CD4-positive, alpha-beta T cell (primary cell): ENCODE measurements at regions of chr1 and their contacts with region 1.

Region 1: GRCh38 chr1:5514519-5515183 is 477.6 kb downstream of the NPHP4 start:
- DNase-seq: peak; percentile 46 to 80 (median 62)
- ATAC-seq: peak; percentile 37
- H3K4me3 ChIP-seq: no peak overlapping the region
- H3K4me3 Mint-ChIP-seq: no peak overlapping the region
- H3K27ac ChIP-seq: no peak overlapping the region
- H3K27ac Mint-ChIP-seq: no peak overlapping the region
- H3K4me1 ChIP-seq: peaks cover 5% of the 10 kb centered on the region
- H3K4me1 Mint-ChIP-seq: peaks cover 4% of the 10 kb centered on the region
- H3K27me3 ChIP-seq: no peaks in the 10 kb centered on the region
- H3K27me3 Mint-ChIP-seq: peaks cover 17% of the 10 kb centered on the region
- CTCF ChIP-seq: peak; percentile 100

Region 2: DNA sequence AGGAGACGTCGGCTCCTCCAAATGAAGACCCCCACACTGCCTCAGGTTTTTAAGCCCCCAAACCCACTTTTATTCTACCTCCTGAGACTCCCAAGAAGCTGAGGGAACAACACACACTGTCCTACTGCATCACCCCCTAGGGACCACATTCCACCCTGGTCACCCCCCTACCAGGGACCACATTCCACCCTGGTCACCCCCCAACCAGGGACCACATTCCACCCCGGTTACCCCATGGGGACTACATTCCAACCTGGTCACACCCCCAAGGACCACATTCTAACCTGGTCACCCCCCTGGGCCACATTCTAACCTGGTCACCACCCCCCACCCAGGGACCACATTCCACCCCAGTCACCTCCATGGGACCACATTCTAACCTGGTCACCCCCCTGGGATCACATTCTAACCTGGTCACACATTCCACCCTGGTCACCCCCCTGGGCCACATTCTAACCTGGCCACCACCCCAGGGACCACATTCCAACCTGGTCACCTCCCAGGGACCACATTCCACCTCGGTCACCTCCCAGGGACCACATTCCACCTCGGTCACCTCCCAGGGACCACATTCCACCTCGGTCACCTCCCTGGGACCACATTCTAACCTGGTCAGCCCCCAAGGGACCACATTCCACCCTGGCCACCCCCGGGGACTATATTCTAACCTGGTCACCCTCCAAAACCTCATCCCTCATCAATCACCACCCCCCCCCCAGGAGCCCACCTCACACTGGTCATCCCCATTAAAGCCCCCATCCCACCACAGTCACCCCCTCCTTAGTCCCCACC is 110.0 kb before region 1 on chr1:
- CTCF ChIA-PET with region 1: no interaction called
- POLR2A ChIA-PET with region 1: no interaction called
- intact Hi-C with region 1: no loop called
- DNase-seq: no peak
- ATAC-seq: no peak
- H3K4me3 ChIP-seq: no peak overlapping the region
- H3K4me3 Mint-ChIP-seq: no peak overlapping the region
- H3K27ac ChIP-seq: no peak overlapping the region
- H3K27ac Mint-ChIP-seq: no peak overlapping the region
- H3K4me1 ChIP-seq: peaks cover 3% of the 10 kb centered on the region
- H3K4me1 Mint-ChIP-seq: peaks cover 5% of the 10 kb centered on the region
- H3K27me3 ChIP-seq: no peaks in the 10 kb centered on the region
- H3K27me3 Mint-ChIP-seq: no peaks in the 10 kb centered on the region
- CTCF ChIP-seq: no peak

Region 3: GRCh38 chr1:5745776-5746610 is 231.3 kb after region 1 on chr1:
- CTCF ChIA-PET with region 1: no interaction called
- POLR2A ChIA-PET with region 1: no interaction called
- intact Hi-C with region 1: loop called (anchors 1 to 2 kb)
- DNase-seq: peak; percentile 26 to 74 (median 40)
- ATAC-seq: peak; percentile 41
- H3K4me3 ChIP-seq: no peak overlapping the region
- H3K4me3 Mint-ChIP-seq: no peak overlapping the region
- H3K27ac ChIP-seq: no peak overlapping the region
- H3K27ac Mint-ChIP-seq: no peak overlapping the region
- H3K4me1 ChIP-seq: peaks cover 4% of the 10 kb centered on the region
- H3K4me1 Mint-ChIP-seq: no peaks in the 10 kb centered on the region
- H3K27me3 ChIP-seq: peaks cover 6 to 13% of the 10 kb centered on the region in 2 experiments
- H3K27me3 Mint-ChIP-seq: peaks cover 32% of the 10 kb centered on the region
- CTCF ChIP-seq: peak; percentile 74

Region 4: DNA sequence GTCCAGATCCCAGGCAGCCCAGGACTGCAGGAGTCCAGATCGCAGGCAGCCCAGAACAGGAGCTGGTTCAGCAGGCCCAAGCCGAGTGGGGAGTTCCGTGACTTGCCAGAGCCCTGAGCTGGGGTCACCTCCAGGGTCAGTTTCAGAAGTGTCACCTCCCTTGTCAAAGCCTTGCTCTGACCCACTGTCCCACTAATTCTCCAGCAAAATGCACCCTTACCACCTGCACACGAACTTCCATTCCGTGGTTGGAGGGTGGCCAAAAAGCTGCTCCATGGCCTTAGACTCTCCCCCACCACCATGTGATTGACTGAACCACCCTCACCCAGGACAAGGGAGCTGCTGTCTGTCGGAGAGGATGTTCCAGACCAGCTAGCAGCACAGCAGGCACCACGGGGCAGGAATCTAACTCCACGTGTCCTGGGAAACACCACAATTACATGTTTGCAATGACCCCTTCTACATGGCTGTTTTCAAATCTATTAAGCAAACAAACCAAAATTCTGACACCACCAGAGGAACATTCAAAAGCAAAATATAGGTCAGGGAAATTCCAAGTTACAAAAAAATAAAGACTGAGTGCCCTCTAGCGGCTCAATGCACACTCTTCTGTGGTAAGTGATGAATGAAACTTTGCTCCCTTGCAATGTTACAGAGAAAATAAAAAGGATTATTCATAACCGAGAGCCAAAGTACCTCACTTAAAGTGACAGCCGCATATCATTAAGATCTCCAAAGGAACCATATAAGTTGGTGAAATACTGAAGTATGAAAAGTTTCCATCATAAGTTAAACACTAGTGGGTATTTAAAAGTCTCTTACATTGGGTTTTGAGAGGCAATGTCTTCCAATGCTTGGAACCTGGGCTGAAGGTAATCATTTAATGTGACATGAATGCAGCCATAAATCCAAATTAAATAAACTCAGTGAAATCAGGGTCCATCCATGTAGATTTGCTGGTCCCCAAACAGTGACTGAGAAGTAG is 401.2 kb after region 1 on chr1:
- CTCF ChIA-PET with region 1: interaction called, 5 read pairs
- POLR2A ChIA-PET with region 1: no interaction called
- intact Hi-C with region 1: loop called (anchors 2 kb)
- DNase-seq: peak in 7 of 14 experiments; percentile 7 to 65 (median 39)
- ATAC-seq: peak; percentile 52
- H3K4me3 ChIP-seq: no peak overlapping the region
- H3K4me3 Mint-ChIP-seq: no peak overlapping the region
- H3K27ac ChIP-seq: no peak overlapping the region
- H3K27ac Mint-ChIP-seq: no peak overlapping the region
- H3K4me1 ChIP-seq: peaks cover 4% of the 10 kb centered on the region
- H3K4me1 Mint-ChIP-seq: peaks cover 6% of the 10 kb centered on the region
- H3K27me3 ChIP-seq: no peaks in the 10 kb centered on the region
- H3K27me3 Mint-ChIP-seq: no peaks in the 10 kb centered on the region
- CTCF ChIP-seq: peak; percentile 66

Region 5: GRCh38 chr1:5975133-5975880 is 460.7 kb after region 1 on chr1:
- CTCF ChIA-PET with region 1: interaction called, 10 read pairs
- POLR2A ChIA-PET with region 1: interaction called, 3 read pairs
- intact Hi-C with region 1: no loop called
- DNase-seq: peak in 9 of 14 experiments; percentile 28 to 68 (median 40)
- ATAC-seq: peak; percentile 76
- H3K4me3 ChIP-seq: no peak overlapping the region
- H3K4me3 Mint-ChIP-seq: no peak overlapping the region
- H3K27ac ChIP-seq: no peak overlapping the region
- H3K27ac Mint-ChIP-seq: no peak overlapping the region
- H3K4me1 ChIP-seq: peaks cover 4% of the 10 kb centered on the region
- H3K4me1 Mint-ChIP-seq: peaks cover 3% of the 10 kb centered on the region
- H3K27me3 ChIP-seq: no peaks in the 10 kb centered on the region
- H3K27me3 Mint-ChIP-seq: no peaks in the 10 kb centered on the region
- CTCF ChIP-seq: peak; percentile 38